Left ventricle myocardium inferior (tissue), 1 donor: ENCODE measurements at regions of chr10 and their contacts with region 1.

Region 1: DNA sequence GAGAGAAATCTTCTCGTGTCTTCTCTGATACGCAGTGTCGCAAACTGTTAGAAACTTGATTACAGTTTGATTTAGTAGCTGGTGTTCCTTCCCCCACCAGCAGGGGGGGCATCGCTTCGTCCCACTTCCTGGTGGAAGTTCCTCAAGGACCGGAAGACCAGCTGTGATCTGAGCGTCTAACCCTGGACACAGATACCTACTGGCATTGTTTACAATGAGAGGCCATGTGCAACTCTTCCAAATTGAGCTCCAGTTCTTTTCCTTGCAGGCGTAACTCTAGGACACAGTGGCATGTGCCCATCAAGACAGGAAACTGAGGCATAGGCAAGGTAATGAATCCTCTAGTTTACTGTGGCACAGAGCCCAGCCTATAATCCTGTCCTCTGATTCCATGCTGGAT is 219.0 kb downstream of the CCDC3 start:
- DNase-seq: peak; percentile 31
- H3K4me3 ChIP-seq: no peak overlapping the region
- H3K27ac ChIP-seq: no peak overlapping the region
- H3K4me1 ChIP-seq: no peaks in the 10 kb centered on the region
- H3K27me3 ChIP-seq: no peaks in the 10 kb centered on the region
- CTCF ChIP-seq: peak; percentile 74

Region 2: DNA sequence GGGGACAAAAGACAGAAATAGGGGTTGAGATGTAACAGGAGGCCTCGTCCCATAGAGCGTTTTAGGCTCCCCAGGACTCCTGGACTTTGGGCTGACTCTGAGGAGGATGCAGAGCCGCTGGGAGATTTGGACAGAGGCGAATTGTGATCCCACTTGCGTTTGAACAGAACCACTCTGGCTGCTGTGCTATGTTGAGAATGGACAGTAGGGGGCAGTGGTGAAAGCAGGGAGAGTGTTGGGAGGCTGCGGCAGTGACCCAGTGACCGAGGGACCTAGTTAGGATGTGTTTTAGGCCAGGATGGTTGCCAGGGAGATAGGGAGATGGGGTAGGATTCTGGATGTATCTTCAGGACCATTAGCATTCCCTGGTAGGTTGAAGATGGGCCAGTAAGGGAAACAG is 52.7 kb before region 1 on chr10:
- intact Hi-C with region 1: no loop called
- DNase-seq: no peak
- H3K4me3 ChIP-seq: no peak overlapping the region
- H3K27ac ChIP-seq: peak overlapping the region; percentile 67
- H3K4me1 ChIP-seq: no peaks in the 10 kb centered on the region
- H3K27me3 ChIP-seq: no peaks in the 10 kb centered on the region
- CTCF ChIP-seq: peak; percentile 27

Region 3: DNA sequence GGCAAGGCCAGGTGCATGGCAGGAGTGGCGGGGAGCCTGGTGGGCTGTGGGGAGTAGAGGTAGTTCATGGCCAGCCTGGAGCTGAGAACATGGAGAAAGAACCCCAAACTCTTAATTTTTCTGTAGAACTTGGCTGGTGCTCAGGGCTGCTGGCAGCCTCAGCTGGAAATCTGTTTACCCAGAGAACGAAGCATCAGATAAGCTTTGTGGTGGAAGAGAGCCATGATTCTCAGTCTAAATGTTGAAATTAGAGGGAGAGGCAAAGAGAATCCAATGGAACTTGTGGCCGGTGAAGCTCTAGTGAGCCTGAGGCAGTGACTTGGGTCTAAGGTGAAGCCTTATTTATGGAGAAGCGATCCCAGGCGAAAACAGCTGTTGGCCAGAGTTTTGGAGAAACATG is 92.6 kb after region 1 on chr10:
- intact Hi-C with region 1: no loop called
- DNase-seq: no peak
- H3K4me3 ChIP-seq: no peak overlapping the region
- H3K27ac ChIP-seq: no peak overlapping the region
- H3K4me1 ChIP-seq: no peaks in the 10 kb centered on the region
- H3K27me3 ChIP-seq: peaks cover 61% of the 10 kb centered on the region
- CTCF ChIP-seq: no peak

Region 4: DNA sequence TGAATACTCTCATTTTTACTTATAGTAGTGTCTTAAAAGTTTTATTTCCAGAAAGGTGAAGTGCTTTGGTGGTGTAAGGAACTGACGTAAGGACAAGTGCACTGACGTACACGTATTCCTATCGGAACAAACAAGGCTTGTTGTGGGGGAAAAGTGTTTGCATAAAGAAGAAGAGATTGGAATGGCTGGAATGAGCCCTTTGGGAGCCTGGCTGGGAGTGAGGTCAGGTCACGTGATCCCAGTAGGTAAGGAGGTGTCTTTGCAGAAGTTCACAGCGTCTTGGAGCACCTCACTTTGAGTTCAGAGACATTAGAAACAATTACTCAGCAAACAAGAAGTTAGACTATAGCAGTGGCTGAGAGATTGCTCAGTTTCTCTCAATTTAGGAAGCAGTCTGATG is 114.7 kb after region 1 on chr10:
- intact Hi-C with region 1: loop called (anchors 10 kb)
- DNase-seq: no peak
- H3K4me3 ChIP-seq: no peak overlapping the region
- H3K27ac ChIP-seq: no peak overlapping the region
- H3K4me1 ChIP-seq: no peaks in the 10 kb centered on the region
- H3K27me3 ChIP-seq: peaks cover 3% of the 10 kb centered on the region
- CTCF ChIP-seq: no peak